ENCODE measurements at regions of chr22 and their contacts with region 1.

Region 1: GRCh38 chr22:38069372-38070249 is 12.4 kb downstream of the PICK1 start:
- DNase-seq: peak; percentile 81 to 85
- ATAC-seq: peak; percentile 82 to 92 (median 89)
- H3K4me3 ChIP-seq: peak overlapping the region in 6 of 10 donors; percentile 17 to 29 (median 22)
- H3K27ac ChIP-seq: peak overlapping the region; percentile 72 to 93 (median 86)
- H3K4me1 ChIP-seq: peaks cover 14 to 47% (median 37%) of the 10 kb centered on the region in 9 donors
- H3K27me3 ChIP-seq: no peaks in the 10 kb centered on the region
- CTCF ChIP-seq: peak; percentile 34 to 76 (median 61)

Region 2: GRCh38 chr22:37999956-38000272 is 69.7 kb before region 1 on chr22:
- intact Hi-C with region 1: loop called in 1 of 10 experiments (anchors 2 kb)
- DNase-seq: no peak
- ATAC-seq: peak in 5 of 8 donors; percentile 23 to 44 (median 29)
- H3K4me3 ChIP-seq: no peak overlapping the region
- H3K27ac ChIP-seq: no peak overlapping the region
- H3K4me1 ChIP-seq: peaks cover 0 to 18% (median 5%) of the 10 kb centered on the region in 9 donors
- H3K27me3 ChIP-seq: no peaks in the 10 kb centered on the region
- CTCF ChIP-seq: no peak

Region 3: GRCh38 chr22:38124236-38124974 is 54.8 kb after region 1 on chr22:
- intact Hi-C with region 1: no loop called
- DNase-seq: no peak
- ATAC-seq: no peak
- H3K4me3 ChIP-seq: no peak overlapping the region
- H3K27ac ChIP-seq: no peak overlapping the region
- H3K4me1 ChIP-seq: no peaks in the 10 kb centered on the region
- H3K27me3 ChIP-seq: no peaks in the 10 kb centered on the region
- CTCF ChIP-seq: no peak